Right ventricle myocardium superior (tissue), 1 donor: ENCODE measurements at regions of chr3 and their contacts with region 1.

Region 1: DNA sequence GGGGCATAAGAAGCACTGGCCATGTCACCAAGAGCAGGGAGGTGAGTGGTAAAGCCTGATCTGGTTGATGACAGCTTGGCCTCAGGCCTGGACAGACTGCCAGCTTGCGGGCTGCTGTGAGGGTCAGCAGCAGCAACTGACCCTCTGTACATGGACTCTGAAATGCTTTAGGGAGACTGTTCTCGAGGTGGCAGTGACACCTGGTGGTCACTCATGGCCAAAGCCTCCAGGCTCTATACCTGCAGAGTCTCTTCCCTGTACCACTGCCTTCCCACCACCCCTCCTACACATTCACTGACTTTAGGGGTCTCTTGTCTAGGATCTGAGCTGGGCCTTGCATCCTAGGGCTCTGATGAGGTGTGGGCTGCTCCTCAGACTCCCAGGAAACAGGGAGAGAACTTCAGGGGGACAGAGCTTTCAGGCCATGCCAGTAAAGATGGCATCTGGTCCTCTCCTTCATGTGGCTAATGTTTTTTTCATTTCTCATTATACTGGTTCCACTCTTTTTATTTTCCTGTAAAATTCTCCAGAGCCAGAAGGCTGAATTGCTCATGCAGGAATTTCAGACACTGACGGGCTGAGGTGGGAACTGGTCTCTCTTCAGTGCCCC is 17.2 kb upstream of the TIMP4 start:
- DNase-seq: peak; percentile 79
- ATAC-seq: peak; percentile 84

Region 2: GRCh38 chr3:12135029-12135657 is 40.8 kb before region 1 on chr3:
- intact Hi-C with region 1: loop called (anchors 1 kb)
- DNase-seq: peak; percentile 88
- ATAC-seq: peak; percentile 90